Vagina (tissue), 2 donors: ENCODE measurements at regions of chr3 and their contacts with region 1.

Region 1: GRCh38 chr3:37855363-37855970 is 6.2 kb upstream of the CTDSPL start:
- DNase-seq: no peak
- H3K4me3 ChIP-seq: no peak overlapping the region
- H3K27ac ChIP-seq: no peak overlapping the region
- H3K4me1 ChIP-seq: peaks cover 27% of the 10 kb centered on the region
- H3K27me3 ChIP-seq: no peaks in the 10 kb centered on the region
- CTCF ChIP-seq: peak; percentile 82 to 95 (median 93)
- POLR2A ChIP-seq: no peak

Region 2: GRCh38 chr3:37608061-37608702 is 247.3 kb before region 1 on chr3:
- intact Hi-C with region 1: no loop called
- DNase-seq: no peak
- H3K4me3 ChIP-seq: no peak overlapping the region
- H3K27ac ChIP-seq: no peak overlapping the region
- H3K4me1 ChIP-seq: peaks cover 14% of the 10 kb centered on the region
- H3K27me3 ChIP-seq: no peaks in the 10 kb centered on the region
- CTCF ChIP-seq: no peak
- POLR2A ChIP-seq: no peak

Region 3: GRCh38 chr3:37969596-37970100 is 114.2 kb after region 1 on chr3:
- intact Hi-C with region 1: loop called (anchors 2 kb)
- DNase-seq: no peak
- H3K4me3 ChIP-seq: no peak overlapping the region
- H3K27ac ChIP-seq: no peak overlapping the region
- H3K4me1 ChIP-seq: peaks cover 12% of the 10 kb centered on the region
- H3K27me3 ChIP-seq: no peaks in the 10 kb centered on the region
- CTCF ChIP-seq: no peak
- POLR2A ChIP-seq: no peak

Region 4: DNA sequence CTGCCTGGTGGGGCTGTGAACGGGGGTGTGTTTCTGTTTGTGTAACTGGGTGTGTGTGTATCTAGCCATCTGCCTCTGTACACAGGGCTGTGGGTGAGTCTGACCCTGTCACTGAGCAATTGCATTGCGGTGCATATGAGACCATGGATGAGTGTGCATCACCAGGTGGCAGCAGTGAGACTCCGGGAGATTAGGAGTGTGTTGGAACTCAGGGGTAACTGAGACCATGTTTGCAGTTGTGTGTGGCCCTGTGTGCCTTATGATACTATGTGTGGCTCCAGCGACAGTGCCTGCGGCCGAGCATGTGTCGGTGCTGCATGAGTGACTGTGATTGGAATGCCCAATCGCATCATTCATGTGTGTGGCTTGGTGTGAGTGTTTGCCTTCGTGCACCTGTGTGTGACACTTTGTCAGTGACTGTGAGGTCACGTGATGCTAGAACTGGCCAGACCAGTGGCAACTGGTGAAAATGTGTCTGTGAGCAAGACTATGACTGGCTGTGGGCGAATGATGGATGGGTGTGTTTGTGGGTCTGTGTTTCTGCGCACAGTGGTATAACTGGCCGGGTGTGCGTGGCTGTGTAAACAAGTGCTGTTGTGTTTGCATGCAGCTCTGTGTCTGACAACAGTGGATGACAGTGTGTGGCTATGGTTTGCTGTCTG is 149.1 kb after region 1 on chr3:
- intact Hi-C with region 1: loop called (anchors 10 kb)
- DNase-seq: no peak
- H3K4me3 ChIP-seq: no peak overlapping the region
- H3K27ac ChIP-seq: peak overlapping the region; percentile 61
- H3K4me1 ChIP-seq: peaks cover 28% of the 10 kb centered on the region
- H3K27me3 ChIP-seq: no peaks in the 10 kb centered on the region
- CTCF ChIP-seq: peak; percentile 40 to 70 (median 51)
- POLR2A ChIP-seq: no peak

Region 5: GRCh38 chr3:38083871-38084333 is 228.4 kb after region 1 on chr3:
- intact Hi-C with region 1: no loop called
- DNase-seq: no peak
- H3K4me3 ChIP-seq: no peak overlapping the region
- H3K27ac ChIP-seq: no peak overlapping the region
- H3K4me1 ChIP-seq: no peaks in the 10 kb centered on the region
- H3K27me3 ChIP-seq: no peaks in the 10 kb centered on the region
- CTCF ChIP-seq: no peak
- POLR2A ChIP-seq: no peak